Colonic mucosa (tissue), 4 donors: ENCODE measurements at regions of chr2 and their contacts with region 1.

Region 1: DNA sequence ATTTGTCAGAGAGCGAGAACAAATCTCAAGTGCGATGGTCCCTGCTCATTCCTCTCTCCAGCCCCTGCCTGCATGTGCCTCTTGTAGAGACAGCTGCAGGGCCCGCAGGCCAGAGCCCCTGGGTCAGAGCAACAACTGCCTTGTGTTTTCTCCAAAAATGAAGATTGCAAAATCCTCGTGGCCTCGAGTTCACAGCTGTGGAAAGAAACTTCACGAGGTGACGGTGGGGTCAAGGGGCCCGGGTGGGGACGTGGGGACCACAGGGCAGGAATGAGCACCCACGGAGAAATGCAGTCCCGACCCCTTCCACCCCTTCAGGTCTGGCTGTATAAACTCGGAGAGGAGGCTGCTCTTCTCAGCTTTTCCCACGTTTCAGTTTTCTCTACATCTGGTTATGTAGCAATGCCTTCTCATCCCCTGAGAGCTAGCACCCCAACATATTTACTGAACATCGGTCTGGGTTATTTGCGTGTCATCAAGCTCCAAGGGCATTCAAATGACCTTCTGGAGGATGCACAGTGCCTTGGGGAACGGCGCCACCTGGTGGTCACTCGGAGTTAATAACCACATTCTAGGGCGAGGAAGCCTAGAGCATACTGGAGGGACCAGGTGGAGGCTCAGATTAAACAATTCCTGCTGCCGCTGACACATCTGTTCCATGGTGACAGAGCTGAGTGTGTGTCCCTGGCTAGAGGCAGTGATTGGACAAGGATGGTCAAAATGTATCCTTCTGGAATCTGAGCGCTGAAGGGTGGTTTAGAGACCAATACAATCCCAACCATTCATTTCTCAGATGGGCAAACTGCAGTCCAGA is 91.4 kb upstream of the CYRIA start:
- DNase-seq: peak; percentile 73
- H3K4me3 ChIP-seq: no peak overlapping the region
- H3K27ac ChIP-seq: no peak overlapping the region
- H3K4me1 ChIP-seq: no peaks in the 10 kb centered on the region
- H3K27me3 ChIP-seq: no peaks in the 10 kb centered on the region
- CTCF ChIP-seq: peak; percentile 80

Region 2: GRCh38 chr2:16553226-16553625 is 203.8 kb before region 1 on chr2:
- intact Hi-C with region 1: loop called (anchors 10 kb)
- DNase-seq: peak; percentile 32
- H3K4me3 ChIP-seq: no peak overlapping the region
- H3K27ac ChIP-seq: no peak overlapping the region
- H3K4me1 ChIP-seq: no peaks in the 10 kb centered on the region
- H3K27me3 ChIP-seq: no peaks in the 10 kb centered on the region
- CTCF ChIP-seq: peak; percentile 48

Region 3: GRCh38 chr2:16617282-16618261 is 139.5 kb before region 1 on chr2:
- intact Hi-C with region 1: loop called (anchors 2 kb)
- DNase-seq: no peak
- H3K4me3 ChIP-seq: no peak overlapping the region
- H3K27ac ChIP-seq: no peak overlapping the region
- H3K4me1 ChIP-seq: peaks cover 6% of the 10 kb centered on the region
- H3K27me3 ChIP-seq: no peaks in the 10 kb centered on the region
- CTCF ChIP-seq: peak; percentile 33